Activated CD4-positive, alpha-beta memory T cell treated with anti-CD3 and anti-CD28 coated beads, Interleukin-2, amount 10 ng/mL, durations not matched to agents 7 days and 5 days (primary cell): ENCODE measurements at regions of chr10 and their contacts with region 1.

Region 1: DNA sequence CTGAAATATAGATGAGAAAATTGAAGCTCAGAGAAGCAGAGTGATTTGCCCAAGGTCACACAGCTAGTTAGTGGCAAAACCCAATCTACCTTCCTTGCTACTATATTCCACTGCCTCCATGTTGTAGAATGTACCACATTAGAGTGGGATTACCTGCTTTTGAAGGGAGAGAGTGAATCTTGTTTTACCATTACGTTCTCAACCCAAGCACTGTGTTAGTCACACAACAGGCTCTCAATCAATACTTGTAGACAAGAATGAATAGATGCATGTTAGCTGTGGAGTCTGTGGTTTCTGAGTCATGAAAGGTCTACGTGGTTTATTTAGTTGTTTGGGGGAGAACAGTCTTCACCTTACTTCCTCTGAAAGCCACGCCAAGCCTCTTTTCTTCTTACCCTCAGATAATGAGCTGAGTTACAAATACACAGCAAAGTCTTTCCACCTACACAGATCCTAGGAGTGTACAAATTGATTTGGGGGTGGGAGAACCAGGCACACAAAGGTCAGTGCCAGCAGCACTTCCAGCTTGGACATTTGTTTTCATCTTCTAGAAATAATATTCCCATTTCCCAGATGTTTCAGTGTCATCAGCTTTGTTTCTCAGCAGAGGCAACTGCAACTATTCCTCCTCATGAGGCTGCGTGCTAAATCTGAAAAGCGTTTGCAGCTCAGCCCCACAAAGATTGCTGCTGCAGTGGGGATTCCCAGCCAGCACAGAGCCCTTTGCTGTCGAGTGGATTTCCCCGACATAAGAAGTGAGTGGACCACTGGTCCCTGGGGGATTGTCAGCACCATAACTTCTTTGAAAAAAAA is 71.5 kb upstream of the ADO start:
- DNase-seq: peak; percentile 54
- H3K4me3 Mint-ChIP-seq: peak overlapping the region; percentile 47
- H3K27ac Mint-ChIP-seq: no peak overlapping the region
- H3K4me1 Mint-ChIP-seq: peaks cover 15% of the 10 kb centered on the region
- H3K27me3 Mint-ChIP-seq: peaks cover 24% of the 10 kb centered on the region

Region 2: DNA sequence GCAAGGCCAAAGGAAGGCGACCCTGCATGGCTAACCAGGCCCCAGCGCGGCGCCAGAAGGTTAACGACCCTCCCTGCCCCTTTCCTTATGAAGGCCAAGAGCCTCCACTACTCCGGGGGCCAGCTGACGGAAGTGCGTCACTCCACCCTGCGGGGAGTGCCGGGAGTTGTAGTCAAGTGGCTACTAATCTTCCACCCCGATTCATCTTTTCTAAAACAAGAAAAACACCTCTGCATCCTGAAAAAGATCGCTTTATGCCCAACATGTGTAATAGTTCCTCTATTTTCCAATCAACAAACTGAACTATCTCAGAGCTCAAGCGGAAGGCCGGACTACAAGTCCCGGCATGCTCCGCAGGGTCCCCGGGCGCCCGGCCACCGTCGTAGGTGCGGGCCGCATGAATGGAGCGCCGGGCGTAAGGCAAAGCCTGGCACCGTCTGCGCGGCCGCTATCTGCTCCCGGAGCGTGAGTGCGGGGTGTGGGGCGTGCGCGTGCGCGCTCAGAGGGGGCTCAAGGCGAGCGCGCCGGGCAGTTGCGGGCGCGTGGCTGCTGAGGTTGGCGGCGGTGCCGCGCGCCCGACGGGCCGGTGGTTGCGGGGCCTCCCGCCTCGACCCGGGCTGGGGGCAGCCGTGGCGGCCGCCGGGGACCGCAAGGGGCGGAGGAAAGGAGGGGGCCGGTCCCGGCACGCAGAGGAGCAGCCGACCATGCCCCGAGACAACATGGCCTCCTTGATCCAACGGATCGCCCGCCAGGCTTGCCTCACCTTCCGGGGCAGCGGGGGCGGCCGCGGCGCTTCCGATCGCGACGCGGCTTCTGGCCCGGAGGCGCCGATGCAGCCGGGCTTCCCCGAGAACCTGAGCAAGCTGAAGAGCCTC is 71.5 kb after region 1 on chr10 and contains the start of gene ADO:
- CTCF ChIA-PET with region 1: interaction called, 5 read pairs
- POLR2A ChIA-PET with region 1: interaction called, 33 read pairs
- DNase-seq: peak; percentile 76
- H3K4me3 Mint-ChIP-seq: peak within 1 kb of the TSS; percentile 88
- H3K27ac Mint-ChIP-seq: peak within 1 kb of the TSS; percentile 96
- H3K4me1 Mint-ChIP-seq: peaks cover 32% of the 10 kb centered on the region
- H3K27me3 Mint-ChIP-seq: peaks cover 10% of the 10 kb centered on the region
- total RNA-seq, gene ADO: 21.8 to 22.2 TPM